Activated CD4-positive, alpha-beta T cell treated with anti-CD3 and anti-CD28 coated beads for 36 hours (primary cell): ENCODE measurements at regions of chrX and their contacts with region 1.

Region 1: DNA sequence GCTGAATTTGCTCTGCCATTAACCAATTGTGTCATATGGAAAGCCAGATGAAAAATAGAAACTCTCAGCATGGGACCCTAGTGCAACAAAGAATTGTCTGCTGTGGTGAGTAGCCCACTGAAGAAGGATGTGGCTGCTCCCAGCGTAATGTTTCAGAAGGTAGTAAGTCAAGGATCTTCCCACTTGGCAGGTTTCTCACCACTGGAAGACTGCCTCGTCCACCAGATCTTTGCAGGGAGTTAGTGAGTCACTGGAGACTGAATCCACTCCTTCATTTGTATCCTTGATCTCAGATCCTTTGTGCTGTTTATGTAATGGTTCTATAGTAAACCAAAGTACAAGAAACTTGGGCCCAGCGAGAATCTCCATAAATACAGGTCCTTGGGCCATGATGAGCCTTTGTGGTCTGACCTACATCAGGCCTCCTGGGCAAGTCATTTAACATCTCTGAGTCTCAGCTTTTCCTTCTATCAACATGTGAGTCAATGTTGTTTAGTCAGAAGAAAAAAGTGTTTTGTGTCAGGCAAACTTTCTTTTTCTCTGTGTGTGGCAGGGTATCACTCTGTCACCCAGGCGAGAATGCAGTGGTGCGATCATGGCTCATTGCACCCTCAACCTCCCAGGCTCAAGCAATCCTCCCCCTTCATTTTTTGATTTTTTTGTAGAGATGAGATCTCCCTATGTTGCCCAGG is 78.0 kb upstream of the CCDC160 start:
- DNase-seq: peak; percentile 68
- ATAC-seq: peak; percentile 93
- H3K4me3 Mint-ChIP-seq: no peak overlapping the region
- H3K27ac Mint-ChIP-seq: peak overlapping the region; percentile 68
- H3K4me1 Mint-ChIP-seq: peaks cover 23% of the 10 kb centered on the region
- H3K27me3 Mint-ChIP-seq: no peaks in the 10 kb centered on the region

Region 2: GRCh38 chrX:133921764-133922389 is 237.1 kb before region 1 on chrX:
- CTCF ChIA-PET with region 1: interaction called, 3 read pairs
- POLR2A ChIA-PET with region 1: no interaction called
- intact Hi-C with region 1: loop called in 1 of 2 experiments (anchors 10 kb)
- DNase-seq: peak; percentile 62
- ATAC-seq: peak; percentile 56
- H3K4me3 Mint-ChIP-seq: no peak overlapping the region
- H3K27ac Mint-ChIP-seq: no peak overlapping the region
- H3K4me1 Mint-ChIP-seq: peaks cover 18% of the 10 kb centered on the region
- H3K27me3 Mint-ChIP-seq: no peaks in the 10 kb centered on the region

Region 3: DNA sequence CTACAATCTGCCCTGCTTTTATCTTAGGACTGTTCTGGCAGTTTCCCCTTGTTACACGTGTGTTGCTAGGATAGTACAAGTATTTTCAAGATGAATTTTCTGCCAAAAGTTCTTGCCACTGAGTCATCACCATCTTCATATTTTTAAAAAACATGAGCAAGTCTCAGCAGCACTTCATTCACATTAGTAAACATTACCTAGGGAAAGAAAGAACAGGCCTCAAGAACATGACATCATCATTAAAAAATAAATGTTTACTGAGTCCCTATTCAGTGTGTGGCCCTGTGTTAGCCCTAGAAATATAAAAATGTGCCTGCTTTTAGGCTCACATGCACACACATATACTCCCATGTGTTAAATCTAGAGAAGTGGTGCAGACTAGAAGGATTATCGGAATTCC is 154.9 kb before region 1 on chrX:
- CTCF ChIA-PET with region 1: no interaction called
- POLR2A ChIA-PET with region 1: no interaction called
- intact Hi-C with region 1: loop called (anchors 1 to 10 kb)
- DNase-seq: no peak
- ATAC-seq: peak; percentile 37
- H3K4me3 Mint-ChIP-seq: no peak overlapping the region
- H3K27ac Mint-ChIP-seq: no peak overlapping the region
- H3K4me1 Mint-ChIP-seq: peaks cover 11% of the 10 kb centered on the region
- H3K27me3 Mint-ChIP-seq: peaks cover 2% of the 10 kb centered on the region

Region 4: DNA sequence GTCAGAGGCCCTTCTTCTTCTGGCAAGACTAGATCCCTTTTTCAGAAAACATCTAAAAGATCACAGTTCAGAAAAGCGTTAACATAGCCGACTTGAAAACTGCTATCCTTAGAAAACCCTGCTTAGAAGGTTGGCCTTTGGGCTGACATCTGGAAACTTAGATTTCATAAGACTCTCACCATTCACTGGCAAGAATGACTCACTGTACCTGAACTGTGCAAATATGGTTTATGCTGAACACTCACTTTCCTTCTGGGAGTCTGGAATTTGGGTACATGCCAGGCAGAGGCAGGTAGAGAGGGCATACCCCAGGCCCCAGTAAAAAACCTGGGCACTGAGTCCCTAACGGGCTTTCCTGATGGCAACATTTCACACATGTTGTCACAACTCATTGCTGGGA is 84.8 kb before region 1 on chrX:
- CTCF ChIA-PET with region 1: no interaction called
- POLR2A ChIA-PET with region 1: no interaction called
- intact Hi-C with region 1: no loop called
- DNase-seq: no peak
- ATAC-seq: no peak
- H3K4me3 Mint-ChIP-seq: no peak overlapping the region
- H3K27ac Mint-ChIP-seq: no peak overlapping the region
- H3K4me1 Mint-ChIP-seq: no peaks in the 10 kb centered on the region
- H3K27me3 Mint-ChIP-seq: peaks cover 2% of the 10 kb centered on the region

Region 5: GRCh38 chrX:134171661-134172587 is 13.0 kb after region 1 on chrX:
- CTCF ChIA-PET with region 1: no interaction called
- POLR2A ChIA-PET with region 1: no interaction called
- intact Hi-C with region 1: loop called in 1 of 2 experiments (anchors 1 kb)
- DNase-seq: peak; percentile 70
- ATAC-seq: peak; percentile 61
- H3K4me3 Mint-ChIP-seq: peak overlapping the region; percentile 82
- H3K27ac Mint-ChIP-seq: peak overlapping the region; percentile 89
- H3K4me1 Mint-ChIP-seq: peaks cover 17% of the 10 kb centered on the region
- H3K27me3 Mint-ChIP-seq: peaks cover 10% of the 10 kb centered on the region

Region 6: GRCh38 chrX:134186362-134187121 is 27.6 kb after region 1 on chrX:
- CTCF ChIA-PET with region 1: interaction called, 3 read pairs
- POLR2A ChIA-PET with region 1: no interaction called
- intact Hi-C with region 1: loop called (anchors 1 kb)
- DNase-seq: peak; percentile 78
- ATAC-seq: peak; percentile 88
- H3K4me3 Mint-ChIP-seq: peak overlapping the region; percentile 64
- H3K27ac Mint-ChIP-seq: peak overlapping the region; percentile 51
- H3K4me1 Mint-ChIP-seq: peaks cover 16% of the 10 kb centered on the region
- H3K27me3 Mint-ChIP-seq: peaks cover 3% of the 10 kb centered on the region